CD8-positive, alpha-beta T cell (primary cell): ENCODE measurements at regions of chr22 and their contacts with region 1.

Region 1: DNA sequence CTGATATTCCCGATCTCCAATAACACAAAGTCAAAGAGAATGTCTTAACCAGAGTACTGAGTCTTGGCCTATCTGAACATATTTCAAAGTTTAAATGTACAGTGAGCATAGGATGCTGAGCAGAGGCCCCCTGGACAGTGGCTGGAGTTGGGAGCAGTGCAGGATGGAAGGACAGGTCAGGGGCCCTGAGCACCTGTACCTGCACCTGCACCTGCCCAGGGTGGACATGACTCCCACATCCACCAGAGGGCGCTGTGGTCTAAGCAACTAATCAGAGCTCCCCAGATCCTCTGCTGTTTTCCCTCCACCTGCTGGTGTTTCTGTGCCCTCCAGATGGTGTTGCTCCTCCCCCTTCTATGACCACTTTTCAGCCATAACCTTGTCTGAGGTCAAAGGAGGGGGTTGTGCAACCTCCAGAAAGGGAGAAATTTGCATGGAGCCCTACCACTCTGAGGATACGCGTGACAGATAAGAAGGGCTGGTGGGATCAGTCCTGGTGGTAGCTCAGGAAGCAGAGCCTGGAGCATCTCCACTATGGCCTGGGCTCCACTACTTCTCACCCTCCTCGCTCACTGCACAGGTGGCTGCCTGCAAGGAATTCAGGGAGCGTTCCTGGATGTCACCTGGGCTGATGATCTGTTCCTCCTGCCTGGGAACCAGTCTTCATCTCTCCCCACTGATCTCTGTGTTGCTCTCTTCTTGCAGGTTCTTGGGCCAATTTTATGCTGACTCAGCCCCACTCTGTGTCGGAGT is 49.1 kb upstream of the VPREB1 start:
- DNase-seq: peak; percentile 64 to 87 (median 80)
- ATAC-seq: peak; percentile 91
- H3K4me3 ChIP-seq: no peak overlapping the region
- H3K4me3 Mint-ChIP-seq: no peak overlapping the region
- H3K27ac ChIP-seq: no peak overlapping the region
- H3K27ac Mint-ChIP-seq: no peak overlapping the region
- H3K4me1 ChIP-seq: no peaks in the 10 kb centered on the region
- H3K4me1 Mint-ChIP-seq: no peaks in the 10 kb centered on the region
- H3K27me3 ChIP-seq: no peaks in the 10 kb centered on the region
- H3K27me3 Mint-ChIP-seq: peaks cover 12% of the 10 kb centered on the region
- CTCF ChIP-seq: peak; percentile 95

Region 2: DNA sequence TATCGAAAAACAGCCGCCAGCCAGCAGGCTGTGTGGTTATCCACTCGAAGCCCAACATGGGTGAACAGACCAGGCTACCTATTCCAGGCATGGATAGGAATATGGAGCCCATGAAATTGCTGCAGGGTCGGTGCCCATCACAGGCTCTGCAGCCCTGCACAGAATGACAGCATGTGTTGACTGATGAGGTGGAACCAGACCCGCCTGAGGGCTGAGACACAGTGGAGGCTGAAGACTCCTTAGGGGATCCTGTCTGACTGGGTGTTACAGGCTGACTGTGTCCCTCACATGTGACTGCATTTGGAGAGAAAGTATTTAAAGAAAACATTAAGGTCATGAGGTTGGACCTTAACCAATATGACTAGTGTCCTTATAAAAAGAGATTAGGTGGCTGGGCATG is 453.6 kb before region 1 on chr22:
- CTCF ChIA-PET with region 1: no interaction called
- POLR2A ChIA-PET with region 1: no interaction called
- intact Hi-C with region 1: no loop called
- DNase-seq: no peak
- ATAC-seq: no peak
- H3K4me3 ChIP-seq: no peak overlapping the region
- H3K4me3 Mint-ChIP-seq: no peak overlapping the region
- H3K27ac ChIP-seq: no peak overlapping the region
- H3K27ac Mint-ChIP-seq: no peak overlapping the region
- H3K4me1 ChIP-seq: no peaks in the 10 kb centered on the region
- H3K4me1 Mint-ChIP-seq: no peaks in the 10 kb centered on the region
- H3K27me3 ChIP-seq: no peaks in the 10 kb centered on the region
- H3K27me3 Mint-ChIP-seq: no peaks in the 10 kb centered on the region
- CTCF ChIP-seq: no peak

Region 3: GRCh38 chr22:22156716-22157347 is 38.6 kb before region 1 on chr22:
- CTCF ChIA-PET with region 1: no interaction called
- POLR2A ChIA-PET with region 1: no interaction called
- intact Hi-C with region 1: loop called (anchors 1 kb)
- DNase-seq: peak; percentile 21 to 85 (median 62)
- ATAC-seq: peak; percentile 87
- H3K4me3 ChIP-seq: no peak overlapping the region
- H3K4me3 Mint-ChIP-seq: no peak overlapping the region
- H3K27ac ChIP-seq: no peak overlapping the region
- H3K27ac Mint-ChIP-seq: peak overlapping the region; percentile 15
- H3K4me1 ChIP-seq: no peaks in the 10 kb centered on the region
- H3K4me1 Mint-ChIP-seq: peaks cover 8% of the 10 kb centered on the region
- H3K27me3 ChIP-seq: no peaks in the 10 kb centered on the region
- H3K27me3 Mint-ChIP-seq: peaks cover 3% of the 10 kb centered on the region
- CTCF ChIP-seq: peak; percentile 76

Region 4: DNA sequence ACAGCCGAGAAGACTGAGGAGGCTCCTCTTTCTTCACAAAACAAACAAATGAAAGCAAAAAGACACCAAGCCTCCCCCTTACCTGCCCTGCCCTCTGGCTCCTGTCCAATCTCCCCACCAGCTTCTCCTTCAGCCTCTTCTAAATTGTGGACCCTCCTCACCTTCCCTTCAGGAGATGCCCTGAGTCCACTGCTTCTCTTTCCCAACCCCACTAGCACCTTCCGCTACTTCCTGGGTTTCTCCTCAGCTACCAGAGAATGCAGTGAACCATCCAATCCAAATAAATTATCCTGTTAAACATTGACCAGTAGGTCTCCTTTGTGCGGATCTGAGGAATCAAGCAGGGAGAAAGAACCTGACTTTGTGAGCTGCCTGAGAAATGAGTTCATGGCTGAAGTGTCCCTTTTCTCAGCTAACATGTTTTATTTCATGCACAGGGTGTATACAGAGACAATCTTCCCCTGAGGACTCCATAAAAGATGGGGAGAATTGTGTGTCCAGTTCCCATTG is 14.0 kb before region 1 on chr22:
- CTCF ChIA-PET with region 1: interaction called, 16 read pairs
- POLR2A ChIA-PET with region 1: no interaction called
- intact Hi-C with region 1: no loop called
- DNase-seq: no peak
- ATAC-seq: no peak
- H3K4me3 ChIP-seq: no peak overlapping the region
- H3K4me3 Mint-ChIP-seq: no peak overlapping the region
- H3K27ac ChIP-seq: no peak overlapping the region
- H3K27ac Mint-ChIP-seq: no peak overlapping the region
- H3K4me1 ChIP-seq: no peaks in the 10 kb centered on the region
- H3K4me1 Mint-ChIP-seq: no peaks in the 10 kb centered on the region
- H3K27me3 ChIP-seq: peaks cover 0 to 3% of the 10 kb centered on the region in 2 experiments
- H3K27me3 Mint-ChIP-seq: peaks cover 39% of the 10 kb centered on the region
- CTCF ChIP-seq: no peak